Activated B cell treated with CpG ODN at 0.5 μM for 24 hours (primary cell): ENCODE measurements at regions of chrX and their contacts with region 1.

Region 1: GRCh38 chrX:69165087-69165651 is at the start of gene PJA1:
- DNase-seq: peak; percentile 60
- ATAC-seq: peak; percentile 93
- H3K4me3 Mint-ChIP-seq: peak within 1 kb of the TSS; percentile 90
- H3K27ac Mint-ChIP-seq: peak within 1 kb of the TSS; percentile 85
- H3K4me1 Mint-ChIP-seq: peaks cover 21% of the 10 kb centered on the region
- H3K27me3 Mint-ChIP-seq: no peaks in the 10 kb centered on the region
- CTCF ChIP-seq: no peak
- total RNA-seq, gene PJA1: 16.9 and 18.6 TPM in 2 replicates

Region 2: GRCh38 chrX:68498508-68499379 is 666.4 kb before region 1 on chrX and contains the start of gene YIPF6:
- CTCF ChIA-PET with region 1: no interaction called
- POLR2A ChIA-PET with region 1: no interaction called
- intact Hi-C with region 1: loop called (anchors 10 kb)
- DNase-seq: peak; percentile 58
- ATAC-seq: peak; percentile 92
- H3K4me3 Mint-ChIP-seq: peak within 1 kb of the TSS; percentile 95
- H3K27ac Mint-ChIP-seq: peak within 1 kb of the TSS; percentile 92
- H3K4me1 Mint-ChIP-seq: peaks cover 33% of the 10 kb centered on the region
- H3K27me3 Mint-ChIP-seq: no peaks in the 10 kb centered on the region
- CTCF ChIP-seq: no peak
- total RNA-seq, gene YIPF6: 17.9 and 20.2 TPM in 2 replicates

Region 3: GRCh38 chrX:69070949-69071650 is 94.1 kb before region 1 on chrX:
- CTCF ChIA-PET with region 1: no interaction called
- POLR2A ChIA-PET with region 1: no interaction called
- intact Hi-C with region 1: no loop called
- DNase-seq: no peak
- ATAC-seq: no peak
- H3K4me3 Mint-ChIP-seq: no peak overlapping the region
- H3K27ac Mint-ChIP-seq: no peak overlapping the region
- H3K4me1 Mint-ChIP-seq: no peaks in the 10 kb centered on the region
- H3K27me3 Mint-ChIP-seq: no peaks in the 10 kb centered on the region
- CTCF ChIP-seq: no peak

Region 4: GRCh38 chrX:69323786-69324720 is 158.9 kb after region 1 on chrX:
- CTCF ChIA-PET with region 1: no interaction called
- POLR2A ChIA-PET with region 1: no interaction called
- intact Hi-C with region 1: no loop called
- DNase-seq: no peak
- ATAC-seq: no peak
- H3K4me3 Mint-ChIP-seq: no peak overlapping the region
- H3K27ac Mint-ChIP-seq: no peak overlapping the region
- H3K4me1 Mint-ChIP-seq: no peaks in the 10 kb centered on the region
- H3K27me3 Mint-ChIP-seq: no peaks in the 10 kb centered on the region
- CTCF ChIP-seq: no peak

Region 5: GRCh38 chrX:69896046-69896445 is 730.9 kb after region 1 on chrX:
- CTCF ChIA-PET with region 1: no interaction called
- POLR2A ChIA-PET with region 1: interaction called, 10 read pairs
- intact Hi-C with region 1: no loop called
- DNase-seq: no peak
- ATAC-seq: no peak
- H3K4me3 Mint-ChIP-seq: no peak overlapping the region
- H3K27ac Mint-ChIP-seq: no peak overlapping the region
- H3K4me1 Mint-ChIP-seq: no peaks in the 10 kb centered on the region
- H3K27me3 Mint-ChIP-seq: no peaks in the 10 kb centered on the region
- CTCF ChIP-seq: no peak

Region 6: GRCh38 chrX:70133303-70134115 is 968.3 kb after region 1 on chrX and contains the start of gene IGBP1:
- CTCF ChIA-PET with region 1: no interaction called
- POLR2A ChIA-PET with region 1: interaction called, 3 read pairs
- intact Hi-C with region 1: loop called (anchors 2 kb)
- DNase-seq: peak; percentile 57
- ATAC-seq: peak; percentile 82
- H3K4me3 Mint-ChIP-seq: peak within 1 kb of the TSS; percentile 99
- H3K27ac Mint-ChIP-seq: peak within 1 kb of the TSS; percentile 96
- H3K4me1 Mint-ChIP-seq: peaks cover 29% of the 10 kb centered on the region
- H3K27me3 Mint-ChIP-seq: no peaks in the 10 kb centered on the region
- CTCF ChIP-seq: no peak
- total RNA-seq, gene IGBP1: 51.6 and 52.7 TPM in 2 replicates